ENCODE measurements at regions of chr6 and their contacts with region 1.

Region 1: GRCh38 chr6:132962936-132963868 is 148.8 kb downstream of the RPS12 start:
- DNase-seq: peak; percentile 82
- H3K4me3 ChIP-seq: no peak overlapping the region
- H3K27ac ChIP-seq: no peak overlapping the region
- H3K4me1 ChIP-seq: peaks cover 20% of the 10 kb centered on the region
- H3K27me3 ChIP-seq: peaks cover 4 to 6% of the 10 kb centered on the region in 2 experiments
- CTCF ChIP-seq: peak; percentile 71 to 75
- POLR2A ChIP-seq: no peak

Region 2: GRCh38 chr6:132813173-132813856 is 149.9 kb before region 1 on chr6:
- CTCF ChIA-PET with region 1: no interaction called
- POLR2A ChIA-PET with region 1: no interaction called
- dilution Hi-C with region 1: no loop called
- intact Hi-C with region 1: loop called (anchors 5 kb)
- DNase-seq: peak; percentile 75
- H3K4me3 ChIP-seq: peak overlapping the region; percentile 47 to 80 (median 55)
- H3K27ac ChIP-seq: peak overlapping the region; percentile 63
- H3K4me1 ChIP-seq: peaks cover 24% of the 10 kb centered on the region
- H3K27me3 ChIP-seq: peaks cover 4 to 5% of the 10 kb centered on the region in 2 experiments
- CTCF ChIP-seq: no peak
- POLR2A ChIP-seq: peak; percentile 38

Region 3: DNA sequence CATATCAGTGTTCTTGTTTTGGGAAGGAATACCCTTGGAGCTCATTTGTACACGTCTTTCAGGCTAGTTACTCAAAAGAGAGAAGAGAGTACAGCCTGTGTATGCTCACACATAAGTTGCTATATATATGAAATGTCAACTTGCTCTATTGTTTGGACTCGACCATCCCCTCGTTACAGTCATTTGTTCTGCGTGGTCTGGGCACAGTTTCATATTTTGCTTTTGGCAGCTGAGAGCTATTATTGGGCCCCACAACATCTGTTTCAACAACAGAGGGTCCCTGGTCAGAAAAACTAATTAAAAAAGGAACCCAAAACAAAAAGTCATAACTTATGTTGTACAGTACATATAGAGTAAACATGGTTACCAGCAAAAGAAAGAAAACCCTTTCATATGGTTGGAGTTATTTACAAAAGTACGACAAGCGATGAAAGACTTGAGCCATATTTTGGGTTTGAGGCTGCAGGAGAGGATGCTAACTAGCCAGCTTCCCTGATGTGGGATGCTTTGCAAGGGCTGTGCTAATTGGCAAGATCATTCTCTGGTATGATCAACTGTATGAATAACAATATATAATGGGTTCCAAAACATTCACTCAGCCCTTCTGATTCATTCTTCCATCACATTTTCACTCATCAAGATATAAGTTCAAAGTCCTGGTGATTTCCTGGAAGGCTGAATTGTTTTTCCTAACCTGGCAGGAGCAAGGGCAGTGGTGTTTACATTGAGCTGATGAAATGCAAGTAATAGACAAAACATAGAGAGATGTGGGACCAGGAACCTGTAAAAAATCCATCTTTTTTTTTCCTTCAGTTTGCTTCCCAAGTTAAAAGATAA is 11.0 kb before region 1 on chr6:
- CTCF ChIA-PET with region 1: interaction called, 13 read pairs
- POLR2A ChIA-PET with region 1: no interaction called
- dilution Hi-C with region 1: no loop called
- intact Hi-C with region 1: no loop called
- DNase-seq: no peak
- H3K4me3 ChIP-seq: no peak overlapping the region
- H3K27ac ChIP-seq: no peak overlapping the region
- H3K4me1 ChIP-seq: no peaks in the 10 kb centered on the region
- H3K27me3 ChIP-seq: no peaks in the 10 kb centered on the region
- CTCF ChIP-seq: no peak
- POLR2A ChIP-seq: no peak

Region 4: DNA sequence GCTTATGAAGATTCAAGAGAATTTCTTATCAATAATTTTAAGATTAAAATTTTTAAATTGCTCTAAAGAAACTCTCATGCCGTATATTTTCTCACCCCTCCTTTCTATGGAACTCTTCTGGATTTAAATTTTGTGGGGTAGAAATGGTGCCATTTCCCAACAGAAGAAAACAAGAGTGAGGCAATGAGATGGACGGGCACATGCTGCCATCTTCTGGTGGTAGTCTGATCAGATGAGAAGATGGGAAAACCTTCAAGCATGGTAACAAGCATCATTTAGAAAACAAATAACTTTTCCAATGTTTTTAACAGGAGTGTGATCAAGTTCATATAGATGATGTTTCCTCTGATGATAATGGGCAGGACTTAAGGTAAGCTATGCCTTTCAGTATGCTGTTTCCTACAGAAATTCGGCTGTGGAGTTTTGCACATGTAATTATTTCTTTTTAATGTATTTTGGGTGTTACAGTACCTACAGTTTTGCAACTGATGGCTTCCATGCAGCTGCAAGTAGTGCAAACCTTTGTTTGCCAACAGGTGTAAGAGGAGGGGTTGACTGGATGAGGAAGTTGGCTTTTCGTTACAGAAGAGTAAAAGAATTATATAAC is 549.3 kb after region 1 on chr6:
- CTCF ChIA-PET with region 1: interaction called, 11 read pairs
- POLR2A ChIA-PET with region 1: no interaction called
- dilution Hi-C with region 1: no loop called
- intact Hi-C with region 1: loop called (anchors 1 kb)
- DNase-seq: peak; percentile 60
- H3K4me3 ChIP-seq: no peak overlapping the region
- H3K27ac ChIP-seq: no peak overlapping the region
- H3K4me1 ChIP-seq: no peaks in the 10 kb centered on the region
- H3K27me3 ChIP-seq: no peaks in the 10 kb centered on the region
- CTCF ChIP-seq: peak; percentile 21 to 49
- POLR2A ChIP-seq: no peak